Activated naive CD4-positive, alpha-beta T cell treated with anti-CD3 and anti-CD28 coated beads, Interleukin-2, amount 10 ng/mL, durations not matched to agents 7 days and 5 days (primary cell): ENCODE measurements at regions of chr18 and their contacts with region 1.

Region 1: DNA sequence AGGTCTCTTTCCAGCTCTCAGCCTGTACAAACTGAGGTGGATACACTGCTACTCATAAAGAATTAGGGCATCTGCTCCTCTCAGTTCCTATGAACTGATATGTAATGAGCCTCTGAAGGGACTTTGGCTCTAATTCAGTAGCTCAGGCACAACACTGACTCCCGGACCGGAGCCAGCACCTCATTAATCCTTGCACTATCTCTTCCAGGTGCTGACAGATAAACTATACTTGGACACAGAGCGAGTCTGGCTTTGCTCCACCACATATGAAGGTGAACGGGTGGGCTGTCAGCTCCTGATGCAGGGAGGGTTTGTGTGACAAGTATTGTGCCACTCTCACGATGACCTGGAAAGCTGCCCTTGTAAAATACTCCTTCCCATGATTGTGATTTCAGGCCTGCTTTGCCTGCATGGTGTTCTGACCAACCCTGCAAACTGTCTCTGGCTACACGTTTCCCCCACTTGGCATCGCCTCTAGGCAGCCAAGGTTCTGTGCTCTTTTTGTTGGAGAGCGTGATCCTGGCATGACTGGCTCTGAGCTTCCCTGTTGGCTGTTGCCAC is 111.6 kb upstream of the LMAN1 start:
- DNase-seq: no peak
- H3K4me3 Mint-ChIP-seq: no peak overlapping the region
- H3K27ac Mint-ChIP-seq: no peak overlapping the region
- H3K4me1 Mint-ChIP-seq: no peaks in the 10 kb centered on the region
- H3K27me3 Mint-ChIP-seq: no peaks in the 10 kb centered on the region

Region 2: GRCh38 chr18:59200787-59201186 is 269.9 kb before region 1 on chr18:
- CTCF ChIA-PET with region 1: no interaction called
- DNase-seq: no peak
- H3K4me3 Mint-ChIP-seq: no peak overlapping the region
- H3K27ac Mint-ChIP-seq: no peak overlapping the region
- H3K4me1 Mint-ChIP-seq: no peaks in the 10 kb centered on the region
- H3K27me3 Mint-ChIP-seq: peaks cover 38% of the 10 kb centered on the region

Region 3: GRCh38 chr18:59459369-59460079 is 11.1 kb before region 1 on chr18:
- CTCF ChIA-PET with region 1: interaction called, 13 read pairs
- DNase-seq: no peak
- H3K4me3 Mint-ChIP-seq: no peak overlapping the region
- H3K27ac Mint-ChIP-seq: no peak overlapping the region
- H3K4me1 Mint-ChIP-seq: no peaks in the 10 kb centered on the region
- H3K27me3 Mint-ChIP-seq: peaks cover 4% of the 10 kb centered on the region

Region 4: DNA sequence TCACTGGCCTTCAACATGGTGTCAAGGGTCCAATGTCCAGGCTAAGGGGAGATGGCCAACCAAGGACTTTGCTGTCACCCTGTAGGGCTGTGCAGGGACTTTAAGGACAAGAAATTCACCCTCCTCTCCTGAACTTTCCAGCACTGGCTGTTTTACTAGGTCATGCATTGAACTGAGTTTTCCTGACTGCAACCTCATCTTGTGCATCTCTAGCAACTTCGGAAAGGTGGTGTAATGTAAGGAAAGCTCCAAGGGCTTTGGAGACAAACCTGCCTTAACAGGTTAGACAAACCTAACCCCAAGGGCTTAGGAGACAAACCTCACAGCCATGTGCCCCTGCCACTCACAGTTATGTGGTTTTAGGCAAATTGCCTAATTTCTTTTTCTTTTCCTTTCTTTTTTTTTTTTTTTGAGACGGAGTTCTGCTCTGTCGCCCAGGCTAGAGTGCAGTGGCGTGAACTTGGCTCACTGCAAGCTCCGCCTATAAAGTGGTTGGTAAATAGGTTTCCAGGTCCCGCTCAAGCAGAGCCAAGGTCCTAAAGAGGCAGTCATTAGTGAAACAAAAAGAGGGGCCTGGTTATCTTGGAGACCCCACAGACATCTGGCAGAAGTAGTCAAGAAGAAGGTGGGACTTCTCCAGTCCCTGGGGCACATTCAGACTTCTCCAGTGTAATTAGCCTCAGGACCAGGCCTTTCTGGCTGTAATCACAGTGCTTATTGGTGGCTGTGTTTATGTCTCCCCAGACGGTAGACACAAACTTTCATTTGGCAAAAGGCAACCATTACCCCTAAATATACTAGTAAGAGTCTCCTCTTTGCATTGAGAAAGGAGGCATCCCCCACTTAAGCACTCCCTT is 391.6 kb after region 1 on chr18:
- CTCF ChIA-PET with region 1: no interaction called
- DNase-seq: no peak
- H3K4me3 Mint-ChIP-seq: no peak overlapping the region
- H3K27ac Mint-ChIP-seq: no peak overlapping the region
- H3K4me1 Mint-ChIP-seq: no peaks in the 10 kb centered on the region
- H3K27me3 Mint-ChIP-seq: peaks cover 15% of the 10 kb centered on the region